Breast epithelium (tissue), 4 donors: ENCODE measurements at regions of chr22 and their contacts with region 1.

Region 1: GRCh38 chr22:21904250-21904789 is 36.9 kb upstream of the MAPK1 start:
- DNase-seq: peak in 1 of 2 donors; percentile 9
- H3K4me3 ChIP-seq: no peak overlapping the region
- H3K27ac ChIP-seq: no peak overlapping the region
- H3K4me1 ChIP-seq: no peaks in the 10 kb centered on the region
- H3K27me3 ChIP-seq: no peaks in the 10 kb centered on the region
- CTCF ChIP-seq: no peak
- POLR2A ChIP-seq: no peak

Region 2: DNA sequence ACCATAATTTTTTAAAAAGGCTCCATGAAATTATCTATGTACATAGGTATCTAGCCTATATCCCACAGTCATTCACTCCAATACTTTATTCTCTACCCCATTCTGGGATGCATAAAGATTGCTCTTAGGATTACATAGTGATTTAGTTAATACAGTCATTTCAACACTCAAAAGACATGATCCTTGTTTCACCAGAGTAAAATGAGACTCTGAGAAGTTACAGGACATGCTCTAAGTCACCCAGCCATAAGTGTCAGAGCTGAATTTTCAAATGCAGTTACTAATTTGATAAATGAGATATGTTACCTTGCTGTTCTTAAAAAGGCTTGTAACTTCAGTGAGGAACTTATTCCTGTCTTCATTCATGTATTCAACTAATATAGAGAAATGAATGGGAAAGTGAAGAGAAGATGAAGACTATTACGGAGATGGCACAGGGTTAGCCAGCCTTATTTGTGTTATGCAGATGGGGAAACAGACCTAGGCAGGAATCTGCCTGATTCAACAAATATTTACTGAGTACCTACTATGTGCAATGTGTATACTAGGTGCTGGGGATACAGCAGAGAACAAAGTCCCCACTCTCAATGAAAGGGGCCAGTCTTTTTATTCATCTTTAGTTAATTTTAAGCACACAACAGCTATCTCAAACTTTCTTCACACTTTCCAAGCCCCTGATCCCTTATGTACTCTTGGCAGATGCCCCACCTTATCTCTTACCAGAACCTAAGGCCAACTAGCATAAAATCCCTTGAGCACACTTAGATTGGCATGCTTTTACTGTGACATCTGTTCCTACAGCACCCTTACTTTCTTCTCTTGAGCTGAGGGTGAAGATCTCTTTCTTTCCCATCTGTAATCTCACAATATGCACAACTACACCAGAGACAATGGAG is 58.5 kb before region 1 on chr22:
- intact Hi-C with region 1: no loop called
- DNase-seq: no peak
- H3K4me3 ChIP-seq: no peak overlapping the region
- H3K27ac ChIP-seq: no peak overlapping the region
- H3K4me1 ChIP-seq: no peaks in the 10 kb centered on the region
- H3K27me3 ChIP-seq: no peaks in the 10 kb centered on the region
- CTCF ChIP-seq: no peak
- POLR2A ChIP-seq: no peak

Region 3: DNA sequence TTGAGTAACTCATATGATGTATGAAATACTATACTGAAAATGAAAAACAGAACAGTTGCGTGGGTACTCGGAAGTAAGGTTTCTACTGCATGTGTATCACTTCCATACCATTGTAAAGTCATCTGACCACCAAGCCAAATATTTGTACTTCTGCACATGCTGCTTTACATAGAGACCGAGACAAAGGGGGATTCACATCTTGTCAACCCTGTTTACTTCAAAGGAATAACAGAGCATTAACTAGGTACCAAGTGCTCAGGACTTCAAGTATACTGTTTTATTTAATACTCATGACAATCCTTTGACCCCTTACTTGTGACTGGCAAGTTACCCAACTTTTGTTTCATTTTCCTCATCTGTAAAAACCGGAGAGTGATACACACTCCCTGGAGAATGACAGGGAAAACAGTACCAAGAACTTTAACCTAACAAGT is 46.8 kb before region 1 on chr22:
- intact Hi-C with region 1: loop called (anchors 2 kb)
- DNase-seq: no peak
- H3K4me3 ChIP-seq: no peak overlapping the region
- H3K27ac ChIP-seq: no peak overlapping the region
- H3K4me1 ChIP-seq: no peaks in the 10 kb centered on the region
- H3K27me3 ChIP-seq: no peaks in the 10 kb centered on the region
- CTCF ChIP-seq: no peak
- POLR2A ChIP-seq: no peak

Region 4: DNA sequence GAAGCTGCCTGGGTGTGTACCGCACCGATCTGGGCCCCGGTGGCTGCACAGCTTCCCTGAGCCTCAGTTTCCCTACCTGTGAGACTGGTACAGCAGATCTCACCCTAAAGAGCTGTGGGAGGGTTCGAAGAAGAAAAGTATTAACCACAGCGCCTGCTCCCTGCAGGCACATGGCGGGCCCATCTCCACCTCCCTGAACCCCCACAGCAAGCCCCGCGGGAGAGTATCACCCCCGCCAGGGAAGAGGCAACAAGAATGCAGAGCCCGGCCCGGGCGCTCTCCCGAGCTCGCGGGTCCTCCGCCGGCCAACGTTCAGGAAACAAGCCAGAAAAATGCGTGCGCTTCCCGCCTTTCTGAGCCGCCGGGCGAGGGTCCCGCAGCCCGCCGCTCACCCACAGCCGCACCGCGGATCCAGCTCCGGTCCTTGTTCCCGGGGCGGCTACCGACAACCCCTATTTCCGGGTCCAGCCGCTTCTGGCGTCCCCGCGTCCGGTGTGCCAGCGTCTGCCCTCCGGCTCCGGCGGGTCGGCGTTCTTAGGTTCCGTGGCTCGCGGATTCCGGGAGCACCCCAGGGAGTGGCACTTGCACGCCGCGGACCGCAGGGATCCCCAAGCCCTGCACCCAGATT is 78.1 kb after region 1 on chr22 and contains the start of gene TOP3B:
- intact Hi-C with region 1: no loop called
- DNase-seq: peak; percentile 60 to 90
- H3K4me3 ChIP-seq: peak within 1 kb of the TSS; percentile 81 to 99 (median 99)
- H3K27ac ChIP-seq: peak within 1 kb of the TSS; percentile 80 to 91
- H3K4me1 ChIP-seq: peaks cover 6% of the 10 kb centered on the region in 2 donors
- H3K27me3 ChIP-seq: no peaks in the 10 kb centered on the region
- CTCF ChIP-seq: no peak
- POLR2A ChIP-seq: no peak
- total RNA-seq, gene TOP3B: 20.2 to 34.8 (median 33.1) TPM